ENCODE measurements at regions of chr19 and their contacts with region 1.

Region 1: DNA sequence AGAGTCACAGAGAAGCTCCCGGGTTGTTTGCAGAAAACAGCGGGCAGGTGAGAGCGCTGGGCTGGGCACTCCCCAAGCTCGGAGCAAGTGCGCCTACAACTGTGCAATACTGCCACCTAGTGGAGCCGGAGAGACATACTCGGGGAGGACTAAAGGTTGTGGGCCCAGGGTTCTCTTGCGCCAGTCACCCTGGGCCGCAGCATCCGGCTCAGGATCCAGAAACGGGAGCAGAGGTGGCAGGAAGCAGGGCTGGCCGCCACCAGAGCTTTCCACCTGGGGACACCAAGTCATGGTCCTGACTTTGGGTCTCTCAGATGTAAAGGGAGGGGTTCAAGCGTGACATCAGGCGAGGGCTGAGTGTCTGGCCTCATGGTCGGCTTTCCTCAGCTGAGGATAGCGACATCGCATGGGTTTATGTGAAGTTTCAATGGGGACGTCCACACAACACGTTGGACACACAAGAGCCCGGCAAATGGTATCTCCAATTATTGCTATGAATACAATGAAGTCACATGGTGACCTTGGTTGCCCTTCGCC is 11.2 kb upstream of the KLK4 start:
- DNase-seq: no peak
- H3K4me3 ChIP-seq: no peak overlapping the region
- H3K27me3 ChIP-seq: peaks cover 2% of the 10 kb centered on the region; the same call in 1 of the 2 replicates
- CTCF ChIP-seq: peak; percentile 86

Region 2: DNA sequence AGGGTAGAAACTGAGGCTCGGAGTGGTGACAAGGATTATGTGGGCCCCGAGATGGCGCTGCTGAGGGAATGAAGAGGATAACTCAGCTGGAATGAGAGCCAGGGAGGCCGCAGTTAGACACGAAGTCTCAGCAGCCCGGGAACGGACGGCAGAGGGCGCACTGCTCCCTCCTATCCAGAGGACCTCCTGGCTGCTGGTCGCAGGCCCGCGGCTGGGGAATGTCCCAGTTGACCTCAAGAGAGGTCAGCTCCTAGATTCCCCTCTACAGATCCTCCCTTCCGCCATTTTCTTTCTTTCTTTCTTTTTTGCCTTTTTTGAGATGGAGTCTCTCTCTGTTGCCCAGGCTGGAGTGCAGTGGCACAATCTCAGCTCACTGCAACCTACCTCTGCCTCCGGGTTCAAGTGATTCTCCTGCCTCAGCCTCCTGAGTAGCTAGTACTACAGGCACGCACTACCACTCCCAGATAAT is 384.6 kb before region 1 on chr19:
- CTCF ChIA-PET with region 1: interaction called, 24 read pairs
- POLR2A ChIA-PET with region 1: no interaction called
- DNase-seq: peak; percentile 7
- H3K4me3 ChIP-seq: no peak overlapping the region
- H3K27me3 ChIP-seq: no peaks in the 10 kb centered on the region
- CTCF ChIP-seq: peak; percentile 84

Region 3: DNA sequence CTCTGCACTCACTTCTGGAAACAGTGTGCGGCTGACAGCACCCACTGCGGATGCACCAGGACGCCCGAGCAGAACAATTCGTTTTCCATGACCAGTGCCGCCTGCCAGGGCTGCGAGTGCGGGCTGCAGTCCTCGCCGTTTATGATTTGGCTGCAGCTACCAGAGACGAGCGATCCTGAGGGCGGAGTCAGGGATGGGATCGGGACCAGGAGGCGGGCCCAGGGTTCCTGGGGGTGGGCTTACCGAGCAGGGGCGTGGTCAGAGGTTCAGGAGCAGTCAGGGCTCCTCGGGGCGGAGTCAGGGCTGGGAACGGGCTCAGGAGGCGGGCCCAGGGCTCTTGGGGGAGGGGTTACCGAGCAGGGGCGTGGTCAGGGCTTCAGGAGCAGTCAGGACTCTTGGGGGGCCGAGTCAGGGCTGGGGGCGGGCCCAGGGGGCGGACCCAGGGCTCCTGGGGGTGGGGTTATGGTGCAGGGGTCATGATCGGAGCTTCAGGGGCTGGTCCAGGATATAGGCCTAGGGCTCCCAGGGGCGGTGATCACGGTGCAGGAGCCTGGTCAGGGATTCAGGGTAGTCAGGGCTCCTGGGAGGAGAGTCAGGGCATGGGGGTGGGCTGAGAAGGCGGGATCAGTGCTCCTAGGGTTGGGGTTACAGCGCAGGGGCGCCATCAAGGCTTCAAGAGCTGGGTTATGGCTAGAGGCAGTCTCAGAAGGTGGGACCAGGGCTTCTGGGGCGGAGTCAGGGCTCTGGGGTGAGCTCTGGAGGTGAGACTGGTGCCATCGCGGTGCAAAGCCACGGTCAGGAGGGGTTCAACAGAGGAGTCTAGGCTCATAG is 12.9 kb before region 1 on chr19:
- CTCF ChIA-PET with region 1: interaction called, 20 read pairs
- POLR2A ChIA-PET with region 1: no interaction called
- DNase-seq: no peak
- H3K4me3 ChIP-seq: no peak overlapping the region
- H3K27me3 ChIP-seq: peaks cover 4% of the 10 kb centered on the region; the same call in 1 of the 2 replicates
- CTCF ChIP-seq: no peak

Region 4: DNA sequence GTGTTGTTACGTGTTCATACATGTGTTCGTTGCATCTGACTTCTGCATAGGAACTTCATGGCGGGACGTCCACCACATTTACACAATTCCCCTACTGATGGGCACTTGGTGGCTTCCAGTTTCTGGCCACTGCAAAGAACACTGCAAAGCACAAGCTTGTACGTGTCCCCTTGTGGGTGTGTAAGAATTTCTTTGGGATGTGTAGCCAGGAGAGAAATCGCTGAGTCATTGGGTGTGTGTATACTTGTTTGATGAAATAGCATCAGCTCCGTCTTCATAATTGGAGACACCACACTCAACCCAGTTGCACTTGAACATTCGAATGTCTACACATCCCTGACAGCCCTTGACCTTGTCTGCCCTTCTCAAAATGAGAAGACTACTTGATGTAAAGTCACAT is 11.3 kb after region 1 on chr19:
- CTCF ChIA-PET with region 1: interaction called, 22 read pairs
- POLR2A ChIA-PET with region 1: interaction called, 3 read pairs
- DNase-seq: no peak
- H3K4me3 ChIP-seq: no peak overlapping the region
- H3K27me3 ChIP-seq: no peaks in the 10 kb centered on the region
- CTCF ChIP-seq: no peak

Measured in BJ (cell line).